Heart left ventricle (tissue), 16 donors: ENCODE measurements at regions of chr18 and their contacts with region 1.

Region 1: DNA sequence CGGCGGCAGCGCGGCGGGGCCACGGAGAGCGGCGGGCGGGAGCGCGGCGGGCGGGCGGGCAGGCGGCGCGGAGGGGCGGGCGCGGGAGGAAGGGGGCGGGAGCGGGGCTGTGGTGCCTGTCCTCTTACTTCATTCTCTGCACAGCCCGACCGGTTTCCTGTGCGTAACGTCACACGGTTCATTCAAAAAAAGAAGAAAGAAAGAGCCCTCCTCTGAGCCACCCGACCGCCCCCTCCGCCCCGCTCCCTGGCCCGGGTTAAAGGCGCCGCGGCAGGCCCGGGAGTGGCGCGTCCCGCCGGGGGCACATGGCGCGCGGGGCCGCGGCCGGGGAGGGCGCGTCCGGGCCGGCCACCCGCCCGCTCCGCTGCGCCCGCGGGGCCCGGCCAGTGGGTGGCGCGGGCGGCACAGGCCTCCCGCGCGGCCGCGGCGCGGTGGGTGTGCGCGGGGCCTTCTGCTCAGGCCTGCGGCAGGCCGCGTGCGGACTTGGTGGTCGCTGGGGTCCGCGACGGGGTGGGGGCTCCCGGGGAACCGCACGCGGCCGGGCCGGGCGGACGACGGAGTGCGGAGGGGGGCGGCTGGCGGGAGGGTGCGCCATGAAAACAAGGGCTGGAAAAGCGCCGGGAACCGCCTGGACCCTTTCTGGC is 599 bp upstream of the BCL2 start:
- DNase-seq: peak; percentile 86 to 91 (median 89)
- ATAC-seq: peak; percentile 81 to 90 (median 84)
- H3K4me3 ChIP-seq: peak overlapping the region in 11 of 12 donors; percentile 65 to 92 (median 73)
- H3K27ac ChIP-seq: peak overlapping the region in 11 of 12 donors; percentile 52 to 89 (median 83)
- H3K4me1 ChIP-seq: peaks cover 0 to 50% (median 26%) of the 10 kb centered on the region in 12 donors
- H3K27me3 ChIP-seq: peaks cover 0 to 11% (median 0%) of the 10 kb centered on the region in 9 donors
- CTCF ChIP-seq: peak in 1 of 12 donors; percentile 24
- POLR2A ChIP-seq: no peak

Region 2: DNA sequence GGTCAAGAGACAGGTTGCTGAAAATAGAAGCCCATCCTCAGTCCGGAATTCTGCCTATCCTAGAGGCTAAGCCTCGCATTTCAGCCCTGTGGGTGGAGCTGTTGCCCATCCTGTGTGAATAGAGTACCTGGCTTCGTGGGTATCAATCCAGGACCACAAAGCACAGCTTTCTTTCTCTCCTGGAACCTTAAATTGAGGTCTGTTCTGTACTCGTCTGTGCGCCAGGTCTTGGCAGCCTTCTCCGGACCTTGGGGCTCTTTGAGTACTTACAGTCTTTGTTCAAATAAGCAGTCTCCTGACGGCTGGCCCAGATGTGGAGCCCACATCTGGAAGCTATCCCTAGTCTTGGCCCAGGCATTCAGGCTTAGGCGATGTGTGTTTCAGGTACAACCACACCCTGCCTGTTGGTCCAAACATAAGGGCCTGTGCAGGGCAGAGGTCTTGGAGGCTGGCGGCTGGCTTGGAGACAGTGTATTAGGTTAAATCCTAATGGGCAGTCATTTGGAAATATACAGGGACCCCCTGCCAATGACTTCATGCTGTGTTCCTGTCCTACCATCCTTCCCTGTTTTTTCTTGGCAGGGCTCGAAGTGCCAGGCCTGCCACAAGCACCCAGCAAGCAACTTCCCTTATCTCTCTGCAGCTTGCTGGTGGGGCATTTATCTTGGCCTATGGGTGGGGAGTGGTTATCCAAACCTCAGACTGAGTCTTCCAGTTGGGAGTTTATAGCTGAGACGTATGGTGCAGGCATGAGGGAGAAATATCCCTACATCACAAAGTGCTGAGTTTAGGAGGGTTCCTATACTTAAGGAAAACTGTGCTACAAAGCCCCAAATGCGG is 294.7 kb before region 1 on chr18:
- intact Hi-C with region 1: loop called in 3 of 10 experiments (anchors 2 to 5 kb)
- DNase-seq: peak in 2 of 5 donors; percentile 35 to 46
- ATAC-seq: peak in 3 of 4 donors; percentile 75 to 87 (median 82)
- H3K4me3 ChIP-seq: no peak overlapping the region
- H3K27ac ChIP-seq: no peak overlapping the region
- H3K4me1 ChIP-seq: no peaks in the 10 kb centered on the region
- H3K27me3 ChIP-seq: no peaks in the 10 kb centered on the region
- CTCF ChIP-seq: peak in 11 of 12 donors; percentile 19 to 55 (median 43)
- POLR2A ChIP-seq: no peak

Region 3: GRCh38 chr18:63137999-63138435 is 182.2 kb before region 1 on chr18:
- intact Hi-C with region 1: loop called in 4 of 10 experiments (anchors 2 to 5 kb)
- DNase-seq: peak in 4 of 5 donors; percentile 53 to 75 (median 66)
- ATAC-seq: peak; percentile 74 to 95 (median 84)
- H3K4me3 ChIP-seq: peak overlapping the region in 9 of 12 donors; percentile 20 to 45 (median 34)
- H3K27ac ChIP-seq: peak overlapping the region in 7 of 12 donors; percentile 4 to 69 (median 42)
- H3K4me1 ChIP-seq: peaks cover 0 to 52% (median 25%) of the 10 kb centered on the region in 12 donors
- H3K27me3 ChIP-seq: no peaks in the 10 kb centered on the region
- CTCF ChIP-seq: no peak
- POLR2A ChIP-seq: no peak

Region 4: GRCh38 chr18:63253428-63254372 is 66.5 kb before region 1 on chr18:
- intact Hi-C with region 1: loop called in 1 of 10 experiments (anchors 10 kb)
- DNase-seq: no peak
- ATAC-seq: peak in 1 of 4 donors; percentile 49
- H3K4me3 ChIP-seq: peak overlapping the region in 1 of 12 donors; percentile 5
- H3K27ac ChIP-seq: peak overlapping the region in 1 of 12 donors; percentile 22
- H3K4me1 ChIP-seq: peaks cover 0 to 27% (median 0%) of the 10 kb centered on the region in 12 donors
- H3K27me3 ChIP-seq: no peaks in the 10 kb centered on the region
- CTCF ChIP-seq: no peak
- POLR2A ChIP-seq: no peak

Region 5: GRCh38 chr18:63267975-63268721 is 52.0 kb before region 1 on chr18:
- intact Hi-C with region 1: loop called in 3 of 10 experiments (anchors 5 to 10 kb)
- DNase-seq: no peak
- ATAC-seq: no peak
- H3K4me3 ChIP-seq: no peak overlapping the region
- H3K27ac ChIP-seq: no peak overlapping the region
- H3K4me1 ChIP-seq: peaks cover 0 to 42% (median 10%) of the 10 kb centered on the region in 12 donors
- H3K27me3 ChIP-seq: no peaks in the 10 kb centered on the region
- CTCF ChIP-seq: no peak
- POLR2A ChIP-seq: no peak